ENCODE measurements at regions of chr5 and their contacts with region 1.

Region 1: DNA sequence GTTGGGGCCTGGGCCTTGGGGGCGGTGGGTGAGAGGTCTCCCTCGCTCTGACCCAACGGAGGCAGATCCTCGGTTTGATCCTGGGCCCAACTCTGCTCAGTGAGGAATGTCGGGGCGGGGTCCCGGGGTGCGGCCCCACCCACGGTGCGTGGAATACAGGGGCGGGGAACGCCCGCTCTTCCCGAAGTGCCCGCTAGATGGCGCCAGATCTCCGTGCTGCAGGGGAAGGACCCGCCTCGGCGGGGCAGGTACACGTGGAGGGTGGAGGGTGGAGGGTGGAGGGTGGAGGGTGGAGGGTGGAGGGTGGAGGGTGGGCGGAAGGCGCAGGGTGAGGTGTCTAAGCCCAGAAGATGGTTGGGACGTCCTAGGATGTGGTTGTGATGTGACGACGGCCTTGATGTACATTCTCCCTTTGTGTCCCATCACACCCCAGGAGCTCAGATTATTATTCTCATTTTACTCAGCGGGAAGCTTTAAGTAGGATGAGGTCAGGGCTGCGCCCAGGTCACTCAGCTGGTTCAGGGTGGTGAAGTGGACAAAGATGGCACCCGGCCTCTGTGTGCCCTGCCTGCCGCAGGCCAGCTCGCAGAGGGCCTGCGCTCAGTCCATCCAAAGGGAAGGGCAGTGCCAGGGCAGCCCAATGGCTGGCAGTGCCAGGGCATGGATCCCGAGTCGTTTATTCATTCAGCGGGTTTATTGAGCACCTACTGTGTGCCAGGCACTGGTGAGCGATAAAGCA is 9.4 kb upstream of the RPS14 start:
- DNase-seq: peak; percentile 80 to 94 (median 93)
- ATAC-seq: peak; percentile 90 to 93
- H3K4me3 ChIP-seq: peak overlapping the region; percentile 33
- H3K27ac ChIP-seq: no peak overlapping the region
- H3K4me1 ChIP-seq: peaks cover 4% of the 10 kb centered on the region
- H3K27me3 ChIP-seq: no peaks in the 10 kb centered on the region

Region 2: GRCh38 chr5:150544611-150545219 is 85.7 kb after region 1 on chr5:
- intact Hi-C with region 1: loop called (anchors 5 kb)
- DNase-seq: peak; percentile 79 to 92 (median 88)
- ATAC-seq: peak; percentile 77 to 81
- H3K4me3 ChIP-seq: no peak overlapping the region
- H3K27ac ChIP-seq: no peak overlapping the region
- H3K4me1 ChIP-seq: peaks cover 2% of the 10 kb centered on the region
- H3K27me3 ChIP-seq: no peaks in the 10 kb centered on the region